HCT116 (cell line): ENCODE measurements at regions of chr14 and their contacts with region 1.

Region 1: DNA sequence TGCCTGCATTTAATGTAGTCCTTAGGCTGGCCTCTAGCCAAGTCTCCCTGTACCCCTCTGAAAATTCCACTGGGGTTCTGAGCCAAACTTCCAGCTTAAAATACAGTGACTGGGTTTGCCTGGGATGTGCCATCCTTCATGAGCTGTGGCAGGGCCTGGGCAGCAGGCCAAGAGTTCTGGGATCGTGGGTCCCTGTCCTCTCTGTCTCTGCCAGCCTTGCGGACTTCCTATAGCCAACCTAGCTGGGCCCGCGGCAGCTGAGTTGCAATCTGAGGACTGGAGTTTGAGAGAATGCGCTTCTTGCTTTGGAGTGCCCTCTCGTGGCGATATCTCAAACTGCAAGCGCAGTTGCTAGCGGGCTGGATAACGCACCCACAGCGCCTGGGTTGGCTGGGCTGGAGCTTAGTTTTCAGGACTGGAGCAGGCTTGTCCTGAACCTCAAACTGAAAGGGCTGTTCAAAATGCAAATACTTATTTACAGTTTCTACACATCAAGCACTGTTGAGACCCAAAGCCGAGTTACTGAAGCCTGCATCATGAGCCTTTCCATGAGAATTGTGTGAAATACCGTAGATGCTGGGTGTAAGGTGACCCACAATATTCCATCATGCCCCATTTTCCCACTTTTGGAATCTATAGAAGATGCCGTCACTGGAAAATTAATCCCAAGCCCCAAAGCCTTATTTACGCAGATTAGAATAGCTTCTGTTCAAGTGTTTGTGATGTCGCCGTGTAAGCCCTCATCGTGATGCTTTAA is 7.3 kb upstream of the IFI27L2 start:
- DNase-seq: peak; percentile 78
- ATAC-seq: peak; percentile 95
- H3K4me3 ChIP-seq: peak overlapping the region in 1 of 2 experiments; percentile 30; a peak in 1 of 4 replicates
- H3K27ac ChIP-seq: no peak overlapping the region
- H3K4me1 ChIP-seq: peaks cover 0 to 3% of the 10 kb centered on the region in 2 experiments; a peak in 1 of 4 replicates
- H3K27me3 ChIP-seq: no peaks in the 10 kb centered on the region
- CTCF ChIP-seq: peak; percentile 92 to 96 (median 94)
- POLR2A ChIP-seq: no peak
- RAD21 ChIP-seq: peak; percentile 97

Region 2: DNA sequence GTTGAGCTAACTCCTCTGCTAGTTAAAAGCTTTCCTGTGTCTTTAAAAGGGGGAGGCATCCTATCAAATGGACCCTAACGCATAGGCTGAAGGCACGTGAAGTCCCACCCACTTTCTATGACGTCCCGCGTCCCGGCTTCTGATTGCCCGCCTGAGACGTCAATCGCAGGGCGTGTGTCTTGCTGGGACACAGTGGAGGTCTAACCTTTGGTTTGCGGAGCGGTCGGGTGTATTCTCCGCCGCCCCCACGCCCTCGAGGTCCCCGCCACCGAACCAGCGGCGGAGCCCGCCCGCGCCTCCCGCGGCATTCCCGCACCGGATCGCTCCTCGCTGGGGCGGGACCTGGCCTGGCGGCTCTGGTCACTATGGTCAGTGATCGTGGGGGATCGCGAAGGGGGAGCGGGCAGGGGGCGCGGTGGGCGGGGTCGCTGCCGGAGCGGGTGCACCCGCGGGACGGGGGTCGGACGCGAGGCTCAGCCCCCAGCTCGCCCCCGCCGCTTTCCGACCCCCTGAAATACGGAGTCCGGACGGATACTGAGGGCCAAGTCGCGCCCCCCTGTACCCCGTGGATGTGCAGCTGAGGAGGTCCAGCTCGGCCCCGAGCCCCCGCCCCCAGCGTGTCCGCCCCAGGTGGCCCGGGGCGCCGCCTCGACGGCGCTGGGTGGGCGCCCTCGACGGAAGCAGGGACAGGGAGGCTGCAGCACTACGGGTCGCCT is 110.4 kb before region 1 on chr14 and contains the start of gene OTUB2:
- CTCF ChIA-PET with region 1: interaction called, 22 read pairs
- POLR2A ChIA-PET with region 1: no interaction called
- RAD21 ChIA-PET with region 1: interaction called, 3 to 6 read pairs
- intact Hi-C with region 1: no loop called
- DNase-seq: peak; percentile 97
- ATAC-seq: peak; percentile 83
- H3K4me3 ChIP-seq: peak within 1 kb of the TSS; percentile 49 to 66
- H3K27ac ChIP-seq: peak within 1 kb of the TSS; percentile 6; the same call in 1 of the 2 replicates
- H3K4me1 ChIP-seq: peaks cover 29 to 53% of the 10 kb centered on the region in 2 experiments
- H3K27me3 ChIP-seq: no peaks in the 10 kb centered on the region
- CTCF ChIP-seq: no peak
- POLR2A ChIP-seq: no peak
- RAD21 ChIP-seq: no peak
- total RNA-seq, gene OTUB2: 6.6 TPM

Region 3: GRCh38 chr14:94036313-94037050 is 100.3 kb before region 1 on chr14:
- CTCF ChIA-PET with region 1: interaction called, 19 read pairs
- POLR2A ChIA-PET with region 1: no interaction called
- RAD21 ChIA-PET with region 1: interaction called, 8 to 9 read pairs
- intact Hi-C with region 1: loop called (anchors 2 kb)
- DNase-seq: peak; percentile 64
- ATAC-seq: peak; percentile 99
- H3K4me3 ChIP-seq: no peak overlapping the region
- H3K27ac ChIP-seq: no peak overlapping the region
- H3K4me1 ChIP-seq: peaks cover 3 to 16% of the 10 kb centered on the region in 2 experiments; a peak in 3 of 4 replicates
- H3K27me3 ChIP-seq: no peaks in the 10 kb centered on the region
- CTCF ChIP-seq: peak; percentile 88 to 90 (median 90)
- POLR2A ChIP-seq: no peak
- RAD21 ChIP-seq: peak; percentile 72

Region 4: DNA sequence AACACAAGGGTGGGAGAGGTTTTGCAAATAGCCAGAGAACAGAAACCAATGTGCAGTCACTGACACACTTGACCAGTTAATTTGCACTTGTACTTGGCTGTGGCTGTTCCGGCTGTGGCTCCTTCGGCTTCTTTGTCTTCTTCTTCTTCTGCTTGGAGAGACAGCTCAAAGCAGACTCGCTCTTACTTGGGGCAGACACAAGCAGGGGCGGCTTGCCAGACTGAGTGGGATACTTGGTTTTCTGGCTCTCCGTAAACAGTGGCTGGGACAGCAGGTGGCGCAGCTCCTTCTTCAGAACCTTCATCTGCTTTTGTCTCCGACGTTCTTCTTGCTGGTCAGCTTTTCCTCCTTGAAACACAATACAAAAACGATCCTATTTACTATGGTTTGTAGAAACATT is 85.6 kb before region 1 on chr14:
- CTCF ChIA-PET with region 1: interaction called, 20 read pairs
- POLR2A ChIA-PET with region 1: no interaction called
- RAD21 ChIA-PET with region 1: interaction called in 1 of 2 experiments, 5 read pairs
- intact Hi-C with region 1: loop called (anchors 1 kb)
- DNase-seq: no peak
- ATAC-seq: no peak
- H3K4me3 ChIP-seq: no peak overlapping the region
- H3K27ac ChIP-seq: no peak overlapping the region
- H3K4me1 ChIP-seq: no peaks in the 10 kb centered on the region
- H3K27me3 ChIP-seq: no peaks in the 10 kb centered on the region
- CTCF ChIP-seq: peak; percentile 34 to 42 (median 37); a peak in 4 of 6 replicates
- POLR2A ChIP-seq: no peak
- RAD21 ChIP-seq: peak; percentile 39; the same call in 1 of the 2 replicates

Region 5: DNA sequence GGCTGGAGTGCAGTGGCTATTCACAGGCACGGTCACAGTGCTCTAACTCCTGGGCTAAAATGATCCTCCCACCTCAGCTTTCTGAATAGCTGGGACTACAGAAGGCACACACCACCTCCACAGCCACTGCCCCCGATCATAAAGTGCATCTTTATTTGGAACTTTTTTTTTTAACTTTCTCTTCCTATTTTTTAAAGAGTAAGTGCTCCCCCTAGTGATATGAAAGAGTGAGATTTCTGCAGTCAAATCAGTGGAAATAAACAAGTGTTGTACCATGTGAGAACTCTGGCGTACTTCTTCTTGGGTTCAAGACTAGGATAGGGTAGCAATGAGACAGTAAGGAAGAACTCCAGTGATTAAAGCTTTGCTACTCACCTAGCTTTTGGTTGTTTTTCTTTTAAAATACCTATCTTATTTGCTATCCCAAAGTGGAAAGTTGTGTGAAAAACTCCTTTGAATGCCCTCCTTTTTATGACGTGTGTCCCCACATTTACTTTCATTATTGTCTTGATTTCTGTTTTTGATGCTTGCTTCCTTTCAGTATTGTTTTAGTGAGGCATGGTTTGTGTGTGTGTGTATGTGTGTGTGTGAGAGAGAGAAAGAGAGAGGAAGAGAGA is 44.0 kb after region 1 on chr14:
- CTCF ChIA-PET with region 1: interaction called, 15 read pairs
- POLR2A ChIA-PET with region 1: no interaction called
- RAD21 ChIA-PET with region 1: interaction called in 1 of 2 experiments, 4 read pairs
- intact Hi-C with region 1: loop called (anchors 1 kb)
- DNase-seq: peak; percentile 35
- ATAC-seq: peak; percentile 89
- H3K4me3 ChIP-seq: 0 out of 4 replicates have a peak overlapping the region, but pooled peaks of 1 of the 2 experiments have one; percentile 8
- H3K27ac ChIP-seq: no peak overlapping the region
- H3K4me1 ChIP-seq: peaks cover 0 to 12% of the 10 kb centered on the region in 2 experiments; a peak in 3 of 4 replicates
- H3K27me3 ChIP-seq: no peaks in the 10 kb centered on the region
- CTCF ChIP-seq: peak; percentile 48 to 71 (median 67)
- POLR2A ChIP-seq: no peak
- RAD21 ChIP-seq: peak; percentile 73

Region 6: GRCh38 chr14:94373708-94374107 is 237.0 kb after region 1 on chr14:
- CTCF ChIA-PET with region 1: no interaction called
- POLR2A ChIA-PET with region 1: no interaction called
- RAD21 ChIA-PET with region 1: no interaction called
- intact Hi-C with region 1: no loop called
- DNase-seq: peak; percentile 67
- ATAC-seq: peak; percentile 90
- H3K4me3 ChIP-seq: no peak overlapping the region
- H3K27ac ChIP-seq: peak overlapping the region; percentile 19; the same call in 1 of the 2 replicates
- H3K4me1 ChIP-seq: peaks cover 14 to 34% of the 10 kb centered on the region in 2 experiments
- H3K27me3 ChIP-seq: no peaks in the 10 kb centered on the region
- CTCF ChIP-seq: no peak
- POLR2A ChIP-seq: no peak
- RAD21 ChIP-seq: no peak

Region 7: DNA sequence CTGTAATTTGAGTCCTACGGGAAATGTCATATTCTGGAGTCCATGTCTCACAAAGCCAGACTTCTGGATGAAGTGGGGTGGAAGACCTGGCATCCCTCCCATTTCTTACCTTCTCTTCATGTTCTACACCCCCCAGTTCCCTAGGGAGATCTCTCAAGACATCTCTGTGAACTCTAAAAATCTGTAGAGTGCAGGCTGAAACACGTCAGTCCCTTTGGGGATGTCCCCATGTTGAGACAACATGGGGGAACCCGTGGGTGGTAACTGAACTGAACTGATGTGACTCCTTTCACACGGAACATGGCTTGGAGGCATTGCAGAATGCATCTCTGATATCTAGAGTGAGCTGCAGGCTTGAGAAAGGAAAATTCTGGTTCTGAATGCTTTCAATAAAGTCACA is 357.3 kb after region 1 on chr14:
- CTCF ChIA-PET with region 1: no interaction called
- POLR2A ChIA-PET with region 1: no interaction called
- RAD21 ChIA-PET with region 1: no interaction called
- intact Hi-C with region 1: no loop called
- DNase-seq: no peak
- ATAC-seq: no peak
- H3K4me3 ChIP-seq: no peak overlapping the region
- H3K27ac ChIP-seq: no peak overlapping the region
- H3K4me1 ChIP-seq: no peaks in the 10 kb centered on the region
- H3K27me3 ChIP-seq: peaks cover 49% of the 10 kb centered on the region; the same call in 1 of the 2 replicates
- CTCF ChIP-seq: no peak
- POLR2A ChIP-seq: no peak
- RAD21 ChIP-seq: no peak

Region 8: DNA sequence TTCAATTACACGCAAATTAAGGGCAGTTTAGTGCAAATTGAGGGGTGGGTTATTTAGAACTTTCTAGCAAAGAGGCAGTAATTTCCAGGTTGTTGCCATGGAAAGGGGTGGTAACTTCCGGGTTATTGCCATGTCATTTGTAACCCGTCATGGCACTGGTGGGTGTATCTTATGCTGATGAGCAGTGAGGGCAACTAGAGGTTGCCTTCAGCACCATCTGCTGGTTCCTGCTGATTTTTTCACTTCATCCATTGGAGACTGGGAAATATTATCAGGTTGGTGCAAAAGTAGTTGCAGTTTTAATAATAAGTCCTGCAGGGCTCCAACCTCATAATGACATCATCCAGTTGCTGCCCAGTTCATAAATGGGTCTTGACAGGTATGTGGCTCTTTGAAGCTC is 400.1 kb after region 1 on chr14:
- CTCF ChIA-PET with region 1: interaction called, 3 read pairs
- POLR2A ChIA-PET with region 1: no interaction called
- RAD21 ChIA-PET with region 1: no interaction called
- intact Hi-C with region 1: loop called (anchors 10 kb)
- DNase-seq: peak; percentile 74
- ATAC-seq: peak; percentile 93
- H3K4me3 ChIP-seq: no peak overlapping the region
- H3K27ac ChIP-seq: no peak overlapping the region
- H3K4me1 ChIP-seq: peaks cover 0 to 12% of the 10 kb centered on the region in 2 experiments; a peak in 2 of 4 replicates
- H3K27me3 ChIP-seq: no peaks in the 10 kb centered on the region
- CTCF ChIP-seq: peak; percentile 44 to 57 (median 57); a peak in 5 of 6 replicates
- POLR2A ChIP-seq: no peak
- RAD21 ChIP-seq: peak; percentile 66

Region 9: GRCh38 chr14:94689218-94689984 is 552.6 kb after region 1 on chr14:
- CTCF ChIA-PET with region 1: no interaction called
- POLR2A ChIA-PET with region 1: no interaction called
- RAD21 ChIA-PET with region 1: no interaction called
- intact Hi-C with region 1: loop called (anchors 10 kb)
- DNase-seq: no peak
- ATAC-seq: peak; percentile 99
- H3K4me3 ChIP-seq: peak overlapping the region; percentile 24 to 29; a peak in 3 of 4 replicates
- H3K27ac ChIP-seq: no peak overlapping the region
- H3K4me1 ChIP-seq: peaks cover 0 to 8% of the 10 kb centered on the region in 2 experiments; a peak in 1 of 4 replicates
- H3K27me3 ChIP-seq: no peaks in the 10 kb centered on the region
- CTCF ChIP-seq: peak; percentile 90 to 97 (median 96)
- POLR2A ChIP-seq: no peak
- RAD21 ChIP-seq: peak; percentile 98